CD4-positive, alpha-beta T cell (primary cell): ENCODE measurements at regions of chr2 and their contacts with region 1.

Region 1: GRCh38 chr2:223930103-223930976 is 14.8 kb downstream of the WDFY1 start:
- DNase-seq: peak in 2 of 14 experiments; percentile 37 to 54
- ATAC-seq: no peak
- H3K4me3 ChIP-seq: no peak overlapping the region
- H3K4me3 Mint-ChIP-seq: peak overlapping the region; percentile 68
- H3K27ac ChIP-seq: no peak overlapping the region
- H3K27ac Mint-ChIP-seq: peak overlapping the region; percentile 68
- H3K4me1 ChIP-seq: peaks cover 28% of the 10 kb centered on the region
- H3K4me1 Mint-ChIP-seq: peaks cover 68% of the 10 kb centered on the region
- H3K27me3 ChIP-seq: no peaks in the 10 kb centered on the region
- H3K27me3 Mint-ChIP-seq: no peaks in the 10 kb centered on the region
- CTCF ChIP-seq: no peak

Region 2: DNA sequence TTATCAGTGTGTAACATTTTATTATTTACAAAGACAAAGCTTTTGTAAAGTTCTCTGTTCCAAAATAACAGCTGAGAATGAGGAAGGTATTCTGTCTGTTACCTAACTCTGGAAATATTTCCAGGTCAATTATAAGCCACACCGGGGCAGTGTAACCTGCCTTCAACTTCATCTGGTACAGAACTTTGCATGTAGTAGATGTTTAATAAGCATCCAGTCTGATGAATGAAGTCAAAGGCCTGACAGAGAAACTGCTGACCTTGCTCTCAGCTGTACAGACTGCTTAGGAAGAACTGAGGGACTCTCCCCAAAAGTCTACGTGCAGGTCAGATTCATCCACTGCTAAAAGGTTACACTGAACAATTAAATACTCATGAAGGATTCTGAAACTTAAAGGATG is 28.5 kb before region 1 on chr2:
- CTCF ChIA-PET with region 1: no interaction called
- POLR2A ChIA-PET with region 1: no interaction called
- intact Hi-C with region 1: loop called in 1 of 2 experiments (anchors 2 kb)
- DNase-seq: no peak
- ATAC-seq: no peak
- H3K4me3 ChIP-seq: no peak overlapping the region
- H3K4me3 Mint-ChIP-seq: no peak overlapping the region
- H3K27ac ChIP-seq: no peak overlapping the region
- H3K27ac Mint-ChIP-seq: no peak overlapping the region
- H3K4me1 ChIP-seq: peaks cover under 1% of the 10 kb centered on the region
- H3K4me1 Mint-ChIP-seq: no peaks in the 10 kb centered on the region
- H3K27me3 ChIP-seq: no peaks in the 10 kb centered on the region
- H3K27me3 Mint-ChIP-seq: no peaks in the 10 kb centered on the region
- CTCF ChIP-seq: no peak

Region 3: DNA sequence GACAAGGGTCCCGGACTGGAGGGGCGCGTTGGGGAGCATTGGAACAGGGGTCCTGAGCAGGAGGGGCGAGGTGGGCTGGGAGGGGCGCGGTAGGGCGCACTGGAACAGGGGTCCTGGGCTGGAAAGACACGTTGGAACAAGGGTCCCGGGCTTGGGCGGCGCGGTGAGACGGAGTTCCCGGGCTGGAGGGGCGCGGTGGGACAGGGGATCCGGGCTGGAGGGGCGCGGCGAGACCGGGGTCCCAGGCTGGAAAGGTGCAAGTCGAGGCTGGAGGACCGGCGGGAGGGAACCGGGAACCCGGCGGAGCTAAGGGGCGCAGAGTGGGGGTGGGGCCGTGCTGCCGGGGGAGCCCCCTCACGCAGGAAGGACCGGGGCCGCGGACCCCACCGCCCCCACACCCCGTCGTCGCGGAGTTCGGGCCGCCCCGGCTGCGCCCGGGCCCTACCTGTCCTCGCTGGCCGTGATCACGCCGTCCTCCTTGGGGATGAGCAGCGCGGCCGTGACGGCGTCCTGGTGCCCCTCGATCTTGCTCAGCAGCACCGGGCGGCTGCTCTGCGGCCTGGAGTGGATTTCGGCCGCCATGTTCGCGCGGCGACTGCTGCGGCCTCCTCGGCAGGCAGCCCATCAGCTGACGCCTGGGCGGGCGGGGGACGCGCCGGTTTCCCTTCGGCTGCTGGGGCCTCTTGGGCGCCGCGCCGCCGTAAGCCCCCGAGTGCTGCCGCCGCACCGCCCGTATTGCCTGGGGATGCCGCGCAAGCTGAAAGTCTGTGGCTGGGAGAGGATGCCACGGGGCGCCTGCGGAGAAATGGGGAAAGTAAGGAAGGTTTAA is 14.6 kb after region 1 on chr2 and contains the start of gene WDFY1:
- CTCF ChIA-PET with region 1: no interaction called
- POLR2A ChIA-PET with region 1: interaction called, 4 read pairs
- intact Hi-C with region 1: loop called in 1 of 2 experiments (anchors 2 kb)
- DNase-seq: peak; percentile 48 to 89 (median 75)
- ATAC-seq: peak; percentile 91
- H3K4me3 ChIP-seq: peak within 1 kb of the TSS; percentile 93
- H3K4me3 Mint-ChIP-seq: peak within 1 kb of the TSS; percentile 96
- H3K27ac ChIP-seq: peak within 1 kb of the TSS in 1 of 2 donors; percentile 46
- H3K27ac Mint-ChIP-seq: peak within 1 kb of the TSS; percentile 80
- H3K4me1 ChIP-seq: peaks cover 50% of the 10 kb centered on the region
- H3K4me1 Mint-ChIP-seq: peaks cover 53% of the 10 kb centered on the region
- H3K27me3 ChIP-seq: no peaks in the 10 kb centered on the region
- H3K27me3 Mint-ChIP-seq: no peaks in the 10 kb centered on the region
- CTCF ChIP-seq: no peak
- total RNA-seq, gene WDFY1: 41.1 to 41.5 TPM